Naive thymus-derived CD4-positive, alpha-beta T cell (primary cell): ENCODE measurements at regions of chr3 and their contacts with region 1.

Region 1: GRCh38 chr3:113745273-113746068 is 578 bp downstream of the NAA50 start:
- DNase-seq: peak; percentile 59 to 89 (median 83)
- ATAC-seq: peak; percentile 81
- H3K4me3 ChIP-seq: peak overlapping the region; percentile 90
- H3K4me3 Mint-ChIP-seq: peak overlapping the region; percentile 92 to 100 (median 96)
- H3K27ac ChIP-seq: peak overlapping the region; percentile 99
- H3K27ac Mint-ChIP-seq: peak overlapping the region; percentile 96 to 100 (median 100)
- H3K4me1 ChIP-seq: peaks cover 25 to 43% of the 10 kb centered on the region in 2 donors
- H3K4me1 Mint-ChIP-seq: peaks cover 47 to 81% (median 72%) of the 10 kb centered on the region in 7 donors
- H3K27me3 ChIP-seq: no peaks in the 10 kb centered on the region
- H3K27me3 Mint-ChIP-seq: no peaks in the 10 kb centered on the region

Region 2: GRCh38 chr3:113019182-113020137 is 726.0 kb before region 1 on chr3:
- CTCF ChIA-PET with region 1: no interaction called
- POLR2A ChIA-PET with region 1: no interaction called
- intact Hi-C with region 1: loop called in 1 of 2 experiments (anchors 10 kb)
- DNase-seq: peak; percentile 69 to 89 (median 74)
- ATAC-seq: peak; percentile 92
- H3K4me3 ChIP-seq: peak overlapping the region; percentile 81
- H3K4me3 Mint-ChIP-seq: peak overlapping the region; percentile 87 to 97 (median 92)
- H3K27ac ChIP-seq: peak overlapping the region; percentile 96
- H3K27ac Mint-ChIP-seq: peak overlapping the region; percentile 87 to 96 (median 91)
- H3K4me1 ChIP-seq: peaks cover 19 to 21% of the 10 kb centered on the region in 2 donors
- H3K4me1 Mint-ChIP-seq: peaks cover 44 to 87% (median 71%) of the 10 kb centered on the region in 7 donors
- H3K27me3 ChIP-seq: no peaks in the 10 kb centered on the region
- H3K27me3 Mint-ChIP-seq: no peaks in the 10 kb centered on the region

Region 3: GRCh38 chr3:113514265-113514769 is 231.2 kb before region 1 on chr3:
- CTCF ChIA-PET with region 1: no interaction called
- POLR2A ChIA-PET with region 1: interaction called, 11 read pairs
- intact Hi-C with region 1: loop called (anchors 1 kb)
- DNase-seq: no peak
- ATAC-seq: no peak
- H3K4me3 ChIP-seq: peak overlapping the region; percentile 99
- H3K4me3 Mint-ChIP-seq: no peak overlapping the region
- H3K27ac ChIP-seq: peak overlapping the region; percentile 87
- H3K27ac Mint-ChIP-seq: no peak overlapping the region
- H3K4me1 ChIP-seq: peaks cover 7 to 8% of the 10 kb centered on the region in 2 donors
- H3K4me1 Mint-ChIP-seq: peaks cover 6 to 30% (median 27%) of the 10 kb centered on the region in 7 donors
- H3K27me3 ChIP-seq: no peaks in the 10 kb centered on the region
- H3K27me3 Mint-ChIP-seq: peaks cover 10 to 29% (median 15%) of the 10 kb centered on the region in 5 donors

Region 4: GRCh38 chr3:113696658-113697499 is 48.6 kb before region 1 on chr3:
- CTCF ChIA-PET with region 1: interaction called, 15 read pairs
- POLR2A ChIA-PET with region 1: interaction called, 69 read pairs
- intact Hi-C with region 1: loop called (anchors 1 kb)
- DNase-seq: peak; percentile 96 to 100 (median 99)
- ATAC-seq: peak; percentile 93
- H3K4me3 ChIP-seq: peak overlapping the region; percentile 82
- H3K4me3 Mint-ChIP-seq: no peak overlapping the region
- H3K27ac ChIP-seq: peak overlapping the region; percentile 99
- H3K27ac Mint-ChIP-seq: no peak overlapping the region
- H3K4me1 ChIP-seq: peaks cover 11 to 27% of the 10 kb centered on the region in 2 donors
- H3K4me1 Mint-ChIP-seq: peaks cover 23 to 36% (median 29%) of the 10 kb centered on the region in 7 donors
- H3K27me3 ChIP-seq: no peaks in the 10 kb centered on the region
- H3K27me3 Mint-ChIP-seq: no peaks in the 10 kb centered on the region

Region 5: GRCh38 chr3:113852506-113852905 is 107.0 kb after region 1 on chr3:
- CTCF ChIA-PET with region 1: no interaction called
- POLR2A ChIA-PET with region 1: no interaction called
- intact Hi-C with region 1: no loop called
- DNase-seq: no peak
- ATAC-seq: no peak
- H3K4me3 ChIP-seq: no peak overlapping the region
- H3K4me3 Mint-ChIP-seq: no peak overlapping the region
- H3K27ac ChIP-seq: no peak overlapping the region
- H3K27ac Mint-ChIP-seq: no peak overlapping the region
- H3K4me1 ChIP-seq: no peaks in the 10 kb centered on the region
- H3K4me1 Mint-ChIP-seq: no peaks in the 10 kb centered on the region
- H3K27me3 ChIP-seq: no peaks in the 10 kb centered on the region
- H3K27me3 Mint-ChIP-seq: peaks cover 0 to 15% (median 11%) of the 10 kb centered on the region in 5 donors

Region 6: GRCh38 chr3:113947372-113948014 is 202.0 kb after region 1 on chr3 and contains the start of gene ZDHHC23:
- CTCF ChIA-PET with region 1: no interaction called
- POLR2A ChIA-PET with region 1: no interaction called
- intact Hi-C with region 1: loop called (anchors 1 to 2 kb)
- DNase-seq: peak; percentile 55 to 82 (median 69)
- ATAC-seq: peak; percentile 92
- H3K4me3 ChIP-seq: peak within 1 kb of the TSS; percentile 62
- H3K4me3 Mint-ChIP-seq: peak within 1 kb of the TSS; percentile 79 to 94 (median 86)
- H3K27ac ChIP-seq: peak within 1 kb of the TSS; percentile 42
- H3K27ac Mint-ChIP-seq: peak within 1 kb of the TSS in 7 of 9 donors; percentile 33 to 81 (median 59)
- H3K4me1 ChIP-seq: peaks cover 0 to 8% of the 10 kb centered on the region in 2 donors
- H3K4me1 Mint-ChIP-seq: peaks cover 8 to 20% (median 13%) of the 10 kb centered on the region in 7 donors
- H3K27me3 ChIP-seq: no peaks in the 10 kb centered on the region
- H3K27me3 Mint-ChIP-seq: peaks cover 9 to 60% (median 14%) of the 10 kb centered on the region in 5 donors
- total RNA-seq, gene ZDHHC23: 2.1 to 3.4 (median 3.2) TPM

Region 7: DNA sequence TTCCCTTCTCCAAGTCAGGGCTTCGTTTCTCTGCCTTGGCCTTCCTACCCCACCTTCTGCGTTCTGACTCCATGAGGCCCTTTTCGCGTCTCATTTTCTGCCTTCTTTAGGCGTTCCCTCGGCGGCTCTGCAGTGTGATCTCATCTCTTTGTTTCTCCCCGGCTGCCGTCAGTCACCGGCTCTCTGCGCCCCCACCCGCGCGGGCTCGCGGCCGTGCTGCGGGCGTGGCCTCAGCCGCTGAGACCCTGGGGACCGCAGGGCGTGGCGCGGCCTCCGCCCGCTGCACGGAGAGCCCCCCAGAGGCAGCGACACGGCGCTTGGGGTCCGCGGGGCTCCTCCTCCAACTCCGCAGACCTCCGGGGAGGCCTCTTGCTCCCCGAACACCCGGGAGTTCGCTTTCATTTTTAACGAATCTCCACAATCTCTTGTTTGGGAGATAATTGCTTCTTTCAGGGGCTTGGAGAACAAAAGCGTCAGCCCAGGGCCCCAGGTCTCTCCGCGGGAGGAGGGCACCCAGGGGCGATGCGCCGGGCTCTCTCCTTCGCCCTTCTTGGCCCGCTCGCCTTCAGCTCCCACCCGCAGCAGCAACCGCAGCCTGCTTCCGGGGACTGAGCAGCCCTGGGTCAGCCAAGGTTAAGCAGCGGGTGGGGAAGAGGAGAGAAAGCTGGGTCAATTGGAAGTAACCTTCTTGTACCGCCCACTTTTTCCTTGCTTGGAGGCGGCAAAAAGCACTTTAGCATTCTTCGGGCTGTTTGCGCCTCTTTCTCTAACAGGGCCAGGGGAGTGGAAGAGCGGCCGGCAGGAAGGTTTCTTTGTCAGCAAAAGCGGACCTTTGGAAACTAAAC is 1913.1 kb after region 1 on chr3:
- CTCF ChIA-PET with region 1: no interaction called
- POLR2A ChIA-PET with region 1: no interaction called
- intact Hi-C with region 1: loop called in 1 of 2 experiments (anchors 2 kb)
- DNase-seq: peak; percentile 49 to 76 (median 62)
- ATAC-seq: peak; percentile 92
- H3K4me3 ChIP-seq: peak overlapping the region; percentile 51
- H3K4me3 Mint-ChIP-seq: peak overlapping the region; percentile 81 to 99 (median 95)
- H3K27ac ChIP-seq: peak overlapping the region; percentile 60
- H3K27ac Mint-ChIP-seq: peak overlapping the region; percentile 90 to 100 (median 98)
- H3K4me1 ChIP-seq: peaks cover 5 to 13% of the 10 kb centered on the region in 2 donors
- H3K4me1 Mint-ChIP-seq: peaks cover 14 to 31% (median 24%) of the 10 kb centered on the region in 7 donors
- H3K27me3 ChIP-seq: no peaks in the 10 kb centered on the region
- H3K27me3 Mint-ChIP-seq: peaks cover 0 to 13% (median 0%) of the 10 kb centered on the region in 5 donors